Naive thymus-derived CD4-positive, alpha-beta T cell (primary cell): ENCODE measurements at regions of chr12 and their contacts with region 1.

Region 1: DNA sequence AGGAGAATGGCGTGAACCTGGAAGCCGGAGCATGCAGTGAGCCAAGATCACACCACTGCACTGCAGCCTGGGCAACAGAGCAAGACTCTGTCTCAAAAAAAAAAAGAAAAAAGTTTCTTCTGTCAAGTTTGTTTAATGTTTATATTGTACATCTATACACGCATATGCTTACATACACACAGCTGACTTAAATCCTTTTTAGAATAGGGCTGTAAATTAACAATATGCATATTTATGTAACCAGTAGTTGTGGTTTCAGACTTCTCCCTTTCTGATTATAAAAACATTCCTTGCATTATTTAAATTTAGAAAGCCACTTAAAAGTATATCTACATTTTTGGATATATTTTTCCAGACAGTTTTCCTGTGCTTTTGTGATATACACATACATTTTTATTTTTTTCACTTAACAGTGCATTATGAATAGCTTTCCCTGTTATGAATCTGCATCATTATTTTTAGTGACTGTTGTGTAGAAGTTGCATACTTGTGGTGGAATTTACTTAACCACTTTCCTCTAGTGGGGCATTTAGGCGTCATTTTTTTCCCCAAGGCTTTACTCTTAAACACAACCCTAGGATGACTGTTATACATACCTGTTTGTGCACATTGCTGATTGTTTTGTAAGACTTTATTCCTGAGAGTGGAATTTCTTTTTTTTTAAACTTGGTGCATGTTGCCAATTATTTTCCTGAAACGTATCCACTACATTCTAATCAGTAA is 29.4 kb downstream of the POLR3B start:
- DNase-seq: no peak
- ATAC-seq: no peak
- H3K4me3 ChIP-seq: no peak overlapping the region
- H3K4me3 Mint-ChIP-seq: no peak overlapping the region
- H3K27ac ChIP-seq: no peak overlapping the region
- H3K27ac Mint-ChIP-seq: no peak overlapping the region
- H3K4me1 ChIP-seq: no peaks in the 10 kb centered on the region
- H3K4me1 Mint-ChIP-seq: peaks cover 0 to 4% (median 0%) of the 10 kb centered on the region in 7 donors
- H3K27me3 ChIP-seq: no peaks in the 10 kb centered on the region
- H3K27me3 Mint-ChIP-seq: no peaks in the 10 kb centered on the region

Region 2: DNA sequence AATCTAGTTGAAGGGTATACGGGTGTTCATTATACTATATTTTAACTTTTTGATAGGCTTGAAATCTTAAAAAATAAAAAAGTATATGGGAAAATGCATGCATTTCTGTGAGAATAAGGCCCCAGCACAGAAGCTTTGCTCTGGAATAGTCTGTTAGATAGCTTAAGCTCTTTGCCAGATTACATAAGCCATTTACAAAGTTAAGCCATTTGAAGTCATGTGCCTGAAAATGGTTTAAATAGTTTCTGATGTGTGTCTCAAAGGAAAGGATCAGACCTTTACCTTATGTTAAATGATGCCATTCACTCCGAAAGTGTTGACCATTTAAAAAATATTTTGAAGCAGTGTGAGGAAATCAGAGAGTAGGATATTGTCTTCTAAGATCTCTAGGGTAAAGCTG is 1228.1 kb before region 1 on chr12:
- CTCF ChIA-PET with region 1: no interaction called
- POLR2A ChIA-PET with region 1: no interaction called
- intact Hi-C with region 1: no loop called
- DNase-seq: no peak
- ATAC-seq: no peak
- H3K4me3 ChIP-seq: no peak overlapping the region
- H3K4me3 Mint-ChIP-seq: no peak overlapping the region
- H3K27ac ChIP-seq: no peak overlapping the region
- H3K27ac Mint-ChIP-seq: peak overlapping the region in 4 of 9 donors; percentile 11 to 62 (median 40)
- H3K4me1 ChIP-seq: no peaks in the 10 kb centered on the region
- H3K4me1 Mint-ChIP-seq: peaks cover 0 to 12% (median 3%) of the 10 kb centered on the region in 7 donors
- H3K27me3 ChIP-seq: no peaks in the 10 kb centered on the region
- H3K27me3 Mint-ChIP-seq: no peaks in the 10 kb centered on the region

Region 3: DNA sequence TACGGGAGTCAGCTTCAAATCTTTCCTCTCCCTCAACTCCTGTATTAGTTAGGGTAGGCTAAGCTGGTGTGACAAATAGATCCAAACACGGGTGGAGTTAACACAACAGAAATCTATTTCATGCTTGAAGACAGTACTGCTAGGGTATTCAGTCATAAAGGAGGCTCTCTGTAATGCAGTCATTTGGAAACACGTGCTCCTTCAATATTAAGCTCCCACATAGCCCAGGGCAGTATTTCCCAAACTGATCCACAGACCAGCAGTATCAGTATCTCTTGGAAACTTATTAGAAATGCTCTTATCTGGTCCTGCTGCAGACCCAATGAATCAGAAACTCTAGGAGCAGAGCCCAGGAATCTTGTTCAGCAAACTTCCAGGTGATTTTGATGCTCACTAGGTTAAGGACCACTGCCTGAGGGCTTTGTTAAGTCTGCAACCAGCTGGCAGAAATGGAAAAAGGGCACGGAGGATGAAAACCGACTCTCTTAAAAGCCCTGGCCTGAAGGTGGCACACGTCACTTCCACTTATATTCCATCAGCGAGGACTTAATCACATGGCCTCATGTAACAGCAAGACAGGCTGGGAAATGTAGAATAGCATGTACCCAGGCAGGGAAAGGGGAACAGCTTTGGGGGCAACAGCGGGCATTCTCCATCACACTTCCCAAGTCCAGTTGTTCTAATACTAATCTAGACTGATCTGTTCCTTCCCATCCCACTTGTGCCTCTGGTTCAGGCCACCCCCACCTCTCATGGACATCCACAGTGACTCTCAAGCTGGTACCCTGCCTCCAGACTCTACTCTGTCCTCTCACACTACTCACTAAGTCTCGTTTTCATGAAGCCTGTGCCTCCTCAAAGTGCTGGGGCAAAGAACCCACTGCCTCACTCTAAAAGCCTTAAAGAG is 349.3 kb after region 1 on chr12:
- CTCF ChIA-PET with region 1: no interaction called
- POLR2A ChIA-PET with region 1: no interaction called
- intact Hi-C with region 1: loop called in 1 of 2 experiments (anchors 1 kb)
- DNase-seq: peak in 7 of 9 donors; percentile 18 to 41 (median 32)
- ATAC-seq: peak; percentile 67
- H3K4me3 ChIP-seq: no peak overlapping the region
- H3K4me3 Mint-ChIP-seq: no peak overlapping the region
- H3K27ac ChIP-seq: no peak overlapping the region
- H3K27ac Mint-ChIP-seq: peak overlapping the region in 1 of 9 donors; percentile 4
- H3K4me1 ChIP-seq: no peaks in the 10 kb centered on the region
- H3K4me1 Mint-ChIP-seq: peaks cover 0 to 8% (median 5%) of the 10 kb centered on the region in 7 donors
- H3K27me3 ChIP-seq: no peaks in the 10 kb centered on the region
- H3K27me3 Mint-ChIP-seq: peaks cover 0 to 18% (median 0%) of the 10 kb centered on the region in 5 donors

Region 4: DNA sequence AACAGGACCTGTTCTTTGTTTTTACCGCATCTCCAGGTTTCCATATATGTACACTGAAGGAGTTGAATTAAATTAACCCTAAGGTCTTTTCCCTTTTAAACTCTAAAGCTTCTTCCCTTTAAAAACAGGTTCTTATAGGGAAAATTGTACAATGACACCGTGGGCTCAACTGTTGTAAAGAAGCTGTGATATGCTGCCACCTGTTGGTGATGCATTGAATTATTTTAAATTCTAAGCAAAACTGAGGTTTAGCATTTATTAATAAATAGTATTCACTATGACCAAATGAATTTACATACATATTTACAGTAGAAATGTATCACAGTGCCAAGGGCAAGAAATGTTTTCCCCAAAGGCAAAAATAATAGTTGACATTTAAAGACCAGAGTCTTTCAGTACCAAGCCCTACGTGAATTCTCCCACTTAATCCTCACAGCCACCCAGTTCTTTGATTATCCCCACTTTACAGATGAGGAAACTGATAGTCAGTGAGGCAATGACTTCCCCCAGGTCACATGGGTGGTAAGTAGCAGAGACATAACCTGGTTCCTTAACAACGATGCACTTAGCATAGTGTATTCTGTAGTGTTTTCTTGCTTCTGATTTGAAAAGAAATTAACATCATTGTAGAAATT is 533.1 kb after region 1 on chr12:
- CTCF ChIA-PET with region 1: interaction called, 5 read pairs
- POLR2A ChIA-PET with region 1: no interaction called
- intact Hi-C with region 1: loop called (anchors 1 kb)
- DNase-seq: peak in 7 of 9 donors; percentile 12 to 53 (median 32)
- ATAC-seq: peak; percentile 60
- H3K4me3 ChIP-seq: no peak overlapping the region
- H3K4me3 Mint-ChIP-seq: no peak overlapping the region
- H3K27ac ChIP-seq: no peak overlapping the region
- H3K27ac Mint-ChIP-seq: no peak overlapping the region
- H3K4me1 ChIP-seq: peaks cover 0 to under 1% of the 10 kb centered on the region in 2 donors
- H3K4me1 Mint-ChIP-seq: peaks cover 8 to 15% (median 9%) of the 10 kb centered on the region in 7 donors
- H3K27me3 ChIP-seq: no peaks in the 10 kb centered on the region
- H3K27me3 Mint-ChIP-seq: peaks cover 5 to 50% (median 14%) of the 10 kb centered on the region in 5 donors

Region 5: DNA sequence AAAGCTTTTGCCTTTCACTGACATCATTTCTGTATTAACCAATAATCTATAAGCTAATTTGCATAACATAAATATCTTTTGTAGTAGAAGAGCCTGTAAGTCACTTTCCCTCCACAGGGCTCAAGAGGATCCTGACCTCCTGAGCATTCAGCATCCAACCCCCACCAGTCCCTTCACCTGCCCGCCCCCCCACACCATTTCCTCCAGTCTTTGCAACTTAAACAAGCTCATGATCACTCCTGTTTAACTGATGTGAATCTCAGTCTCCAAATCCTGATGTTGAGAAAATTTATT is 718.4 kb after region 1 on chr12:
- CTCF ChIA-PET with region 1: interaction called, 6 read pairs
- POLR2A ChIA-PET with region 1: no interaction called
- intact Hi-C with region 1: loop called (anchors 1 kb)
- DNase-seq: no peak
- ATAC-seq: no peak
- H3K4me3 ChIP-seq: no peak overlapping the region
- H3K4me3 Mint-ChIP-seq: no peak overlapping the region
- H3K27ac ChIP-seq: no peak overlapping the region
- H3K27ac Mint-ChIP-seq: no peak overlapping the region
- H3K4me1 ChIP-seq: no peaks in the 10 kb centered on the region
- H3K4me1 Mint-ChIP-seq: peaks cover 0 to 3% (median 0%) of the 10 kb centered on the region in 7 donors
- H3K27me3 ChIP-seq: no peaks in the 10 kb centered on the region
- H3K27me3 Mint-ChIP-seq: peaks cover 0 to 17% (median 0%) of the 10 kb centered on the region in 5 donors

Region 6: DNA sequence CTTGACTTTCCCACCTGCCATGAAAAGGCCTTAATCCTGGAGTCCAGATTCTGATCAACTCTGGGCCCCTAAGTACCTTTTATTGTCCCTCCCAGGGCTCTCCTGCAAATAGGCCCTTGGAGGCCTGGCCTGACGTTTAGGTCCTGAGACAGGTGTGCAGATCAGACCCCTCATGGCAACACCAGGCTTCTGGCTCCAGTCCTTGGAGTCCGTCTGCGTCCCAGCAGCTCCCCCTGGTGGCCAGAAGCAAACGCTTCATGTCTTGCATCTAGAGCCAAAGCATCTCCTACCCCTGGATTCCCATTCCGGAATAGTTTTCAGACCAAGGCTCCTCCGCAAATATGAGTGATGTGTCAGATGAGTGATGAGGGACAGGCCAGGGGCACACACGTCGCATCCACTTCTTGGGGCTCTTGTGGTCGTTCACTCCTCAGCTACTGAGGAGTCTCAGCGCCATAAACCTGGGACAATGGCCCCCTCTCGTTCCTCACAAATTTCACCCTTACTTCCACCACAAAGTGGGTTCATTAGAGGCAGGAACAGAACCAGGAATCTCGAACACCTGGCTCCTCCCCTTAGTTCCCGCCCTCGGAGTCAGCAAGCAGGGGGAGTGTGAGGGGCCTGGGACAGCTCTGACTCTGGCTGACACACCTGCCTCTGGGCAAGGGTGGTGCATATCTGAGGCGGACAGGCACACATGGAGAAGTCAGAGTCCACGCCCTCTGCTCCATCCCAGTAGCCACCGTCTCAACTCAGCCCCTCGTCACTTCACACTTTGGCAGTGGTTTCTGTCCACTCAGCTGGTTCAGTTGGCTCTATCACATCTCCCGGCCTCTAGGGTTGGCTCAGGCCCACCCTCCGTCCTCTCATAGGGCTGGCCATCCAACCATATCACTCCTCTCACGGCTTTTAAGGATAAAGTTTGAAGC is 1220.8 kb after region 1 on chr12:
- CTCF ChIA-PET with region 1: no interaction called
- POLR2A ChIA-PET with region 1: no interaction called
- intact Hi-C with region 1: loop called in 1 of 2 experiments (anchors 5 kb)
- DNase-seq: peak; percentile 55 to 82 (median 71)
- ATAC-seq: peak; percentile 78
- H3K4me3 ChIP-seq: no peak overlapping the region
- H3K4me3 Mint-ChIP-seq: no peak overlapping the region
- H3K27ac ChIP-seq: no peak overlapping the region
- H3K27ac Mint-ChIP-seq: peak overlapping the region in 2 of 9 donors; percentile 9 to 25
- H3K4me1 ChIP-seq: no peaks in the 10 kb centered on the region
- H3K4me1 Mint-ChIP-seq: no peaks in the 10 kb centered on the region
- H3K27me3 ChIP-seq: no peaks in the 10 kb centered on the region
- H3K27me3 Mint-ChIP-seq: no peaks in the 10 kb centered on the region